Posterior vena cava (tissue), 2 donors: ENCODE measurements at regions of chr5 and their contacts with region 1.

Region 1: DNA sequence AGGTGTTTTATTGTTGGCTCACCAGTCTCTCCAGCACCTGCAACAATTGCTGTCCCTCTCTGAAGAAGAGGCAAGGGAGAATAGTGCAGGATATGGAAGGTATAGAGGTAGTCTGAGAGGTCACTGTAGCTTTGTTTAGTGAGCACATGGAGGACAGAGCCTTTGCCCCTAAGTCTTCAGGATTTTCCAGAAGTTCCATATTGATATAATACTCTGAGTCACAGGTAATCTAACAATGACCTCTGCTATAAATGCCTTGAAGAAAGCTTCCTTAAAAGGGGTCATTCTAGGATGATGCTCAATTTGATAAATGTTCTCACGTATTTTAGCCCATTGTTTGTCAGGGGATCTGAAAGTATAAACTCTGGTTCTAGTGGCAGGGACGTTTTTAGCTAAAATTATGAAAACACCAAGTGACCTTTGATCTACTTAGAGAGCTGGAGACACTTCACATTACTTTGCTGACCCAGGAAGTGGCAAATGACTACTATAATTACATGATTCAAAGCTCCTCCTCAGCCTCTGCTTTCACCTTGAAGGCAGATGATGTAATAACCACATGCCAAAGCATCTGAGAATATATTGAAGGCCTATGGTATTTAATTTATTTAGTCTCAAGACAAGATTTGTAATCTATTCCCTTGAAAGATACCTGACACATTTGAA is 366.9 kb upstream of the NUDT12 start:
- DNase-seq: no peak

Region 2: DNA sequence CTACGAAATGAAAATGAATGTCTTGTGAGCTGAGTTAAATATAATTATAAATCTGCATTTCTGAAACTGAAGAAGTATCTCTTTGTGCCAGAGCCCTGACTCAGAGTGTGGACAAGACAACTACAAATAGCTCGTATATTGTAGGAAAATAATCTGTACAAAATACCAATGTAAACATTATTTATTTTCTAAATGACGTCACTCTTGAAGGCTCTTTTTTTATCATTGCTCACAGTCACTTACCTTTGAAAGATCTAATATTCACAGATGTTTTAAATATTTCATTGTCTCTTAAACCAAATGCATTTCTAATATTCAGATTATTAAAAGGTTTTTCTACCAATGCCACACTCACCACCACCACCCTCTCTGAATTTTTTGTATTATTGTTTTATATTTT is 1859.5 kb before region 1 on chr5:
- intact Hi-C with region 1: loop called in 1 of 2 experiments (anchors 10 kb)
- DNase-seq: no peak

Region 3: GRCh38 chr5:104001136-104001535 is 71.7 kb after region 1 on chr5:
- intact Hi-C with region 1: loop called in 1 of 2 experiments (anchors 2 kb)
- DNase-seq: no peak

Region 4: DNA sequence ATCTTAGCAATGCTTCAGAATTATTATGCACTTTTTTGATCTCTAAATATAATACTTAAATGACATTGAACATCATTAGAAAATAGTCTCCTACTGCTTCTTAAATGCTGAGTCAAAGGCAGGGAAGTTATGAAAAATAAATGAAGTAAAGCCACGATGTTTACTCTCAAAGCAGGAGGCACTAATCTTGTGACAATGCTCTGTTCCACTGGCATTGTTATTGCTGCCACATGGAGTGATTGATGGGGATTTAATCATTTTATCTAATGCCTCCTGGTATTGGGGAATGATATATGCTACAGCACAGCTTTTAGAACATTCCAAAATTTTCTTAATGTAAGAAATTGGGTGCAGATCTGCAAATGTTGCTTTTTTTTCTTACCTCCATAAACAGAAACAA is 1288.5 kb after region 1 on chr5:
- intact Hi-C with region 1: no loop called
- DNase-seq: no peak